Adrenal gland (tissue), 19 donors: ENCODE measurements at regions of chr13 and their contacts with region 1.

Region 1: DNA sequence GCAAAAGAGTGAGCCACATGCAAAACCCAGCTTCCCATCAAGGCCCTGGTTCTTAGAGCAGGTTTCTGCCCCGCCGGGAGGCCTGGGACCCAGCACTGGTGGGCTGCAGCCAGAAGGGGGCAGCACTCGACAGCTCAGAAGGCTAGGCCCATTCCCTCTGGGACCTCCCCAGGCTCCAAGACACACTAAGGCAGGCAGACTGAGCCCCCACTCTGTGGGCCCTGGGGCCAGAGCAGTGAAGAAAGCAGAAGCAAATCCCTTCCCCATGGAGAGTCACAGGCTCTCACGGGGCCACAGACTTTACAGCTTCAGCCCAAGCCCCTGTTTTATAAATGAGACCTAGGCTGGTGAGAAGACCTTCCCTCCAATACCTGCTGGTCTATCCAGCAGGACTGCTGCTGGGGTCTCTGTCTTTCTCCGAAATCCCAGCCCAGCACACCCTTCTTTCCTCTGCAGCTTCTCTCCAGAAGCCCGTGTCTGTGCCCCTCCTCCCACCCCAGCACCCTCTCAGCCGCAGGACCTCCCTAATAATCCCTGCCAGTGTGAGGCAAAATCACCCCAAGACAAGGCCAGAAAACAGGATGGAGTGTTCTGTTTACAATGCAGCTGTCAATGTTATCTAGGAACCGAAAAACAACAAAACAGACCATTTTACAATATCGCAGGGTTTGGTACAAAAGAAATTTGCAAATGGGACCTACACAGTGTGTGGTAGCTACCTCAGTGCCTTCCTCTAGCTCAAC is 109.3 kb downstream of the ABCC4 start:
- DNase-seq: peak; percentile 46 to 85 (median 69)
- H3K4me3 ChIP-seq: no peak overlapping the region
- H3K27ac ChIP-seq: no peak overlapping the region
- H3K4me1 ChIP-seq: no peaks in the 10 kb centered on the region
- H3K27me3 ChIP-seq: no peaks in the 10 kb centered on the region
- CTCF ChIP-seq: peak; percentile 42 to 76 (median 66)
- POLR2A ChIP-seq: no peak

Region 2: GRCh38 chr13:95382411-95382810 is 190.4 kb after region 1 on chr13:
- intact Hi-C with region 1: loop called (anchors 5 kb)
- DNase-seq: no peak
- H3K4me3 ChIP-seq: no peak overlapping the region
- H3K27ac ChIP-seq: no peak overlapping the region
- H3K4me1 ChIP-seq: no peaks in the 10 kb centered on the region
- H3K27me3 ChIP-seq: no peaks in the 10 kb centered on the region
- CTCF ChIP-seq: no peak
- POLR2A ChIP-seq: no peak

Region 3: GRCh38 chr13:95403828-95404522 is 212.0 kb after region 1 on chr13:
- intact Hi-C with region 1: loop called (anchors 2 to 5 kb)
- DNase-seq: peak; percentile 87 to 95 (median 89)
- H3K4me3 ChIP-seq: peak overlapping the region in 1 of 4 donors; percentile 16
- H3K27ac ChIP-seq: no peak overlapping the region
- H3K4me1 ChIP-seq: peaks cover 3 to 8% of the 10 kb centered on the region in 2 donors
- H3K27me3 ChIP-seq: no peaks in the 10 kb centered on the region
- CTCF ChIP-seq: peak; percentile 89 to 98 (median 95)
- POLR2A ChIP-seq: no peak

Region 4: GRCh38 chr13:95479731-95480130 is 287.7 kb after region 1 on chr13:
- intact Hi-C with region 1: loop called in 1 of 2 experiments (anchors 10 kb)
- DNase-seq: no peak
- H3K4me3 ChIP-seq: no peak overlapping the region
- H3K27ac ChIP-seq: peak overlapping the region in 2 of 5 donors; percentile 47 to 58
- H3K4me1 ChIP-seq: peaks cover 10 to 13% of the 10 kb centered on the region in 2 donors
- H3K27me3 ChIP-seq: no peaks in the 10 kb centered on the region
- CTCF ChIP-seq: no peak
- POLR2A ChIP-seq: no peak